Thyroid gland (tissue), 4 donors: ENCODE measurements at regions of chr9 and their contacts with region 1.

Region 1: GRCh38 chr9:116149844-116150243 is 3.7 kb upstream of the PAPPA start:
- DNase-seq: peak in 1 of 2 donors; percentile 15
- H3K4me3 ChIP-seq: no peak overlapping the region
- H3K27ac ChIP-seq: no peak overlapping the region
- H3K4me1 ChIP-seq: peaks cover 5 to 7% of the 10 kb centered on the region in 2 donors
- H3K27me3 ChIP-seq: no peaks in the 10 kb centered on the region
- CTCF ChIP-seq: peak; percentile 21 to 72 (median 48)
- POLR2A ChIP-seq: no peak

Region 2: GRCh38 chr9:115604831-115605483 is 544.9 kb before region 1 on chr9:
- intact Hi-C with region 1: no loop called
- DNase-seq: no peak
- H3K4me3 ChIP-seq: no peak overlapping the region
- H3K27ac ChIP-seq: no peak overlapping the region
- H3K4me1 ChIP-seq: no peaks in the 10 kb centered on the region
- H3K27me3 ChIP-seq: no peaks in the 10 kb centered on the region
- CTCF ChIP-seq: no peak
- POLR2A ChIP-seq: no peak

Region 3: GRCh38 chr9:116450378-116451139 is 300.7 kb after region 1 on chr9:
- intact Hi-C with region 1: no loop called
- DNase-seq: peak; percentile 32 to 58
- H3K4me3 ChIP-seq: no peak overlapping the region
- H3K27ac ChIP-seq: peak overlapping the region in 1 of 3 donors; percentile 27
- H3K4me1 ChIP-seq: peaks cover 0 to 9% of the 10 kb centered on the region in 2 donors
- H3K27me3 ChIP-seq: no peaks in the 10 kb centered on the region
- CTCF ChIP-seq: no peak
- POLR2A ChIP-seq: no peak

Region 4: DNA sequence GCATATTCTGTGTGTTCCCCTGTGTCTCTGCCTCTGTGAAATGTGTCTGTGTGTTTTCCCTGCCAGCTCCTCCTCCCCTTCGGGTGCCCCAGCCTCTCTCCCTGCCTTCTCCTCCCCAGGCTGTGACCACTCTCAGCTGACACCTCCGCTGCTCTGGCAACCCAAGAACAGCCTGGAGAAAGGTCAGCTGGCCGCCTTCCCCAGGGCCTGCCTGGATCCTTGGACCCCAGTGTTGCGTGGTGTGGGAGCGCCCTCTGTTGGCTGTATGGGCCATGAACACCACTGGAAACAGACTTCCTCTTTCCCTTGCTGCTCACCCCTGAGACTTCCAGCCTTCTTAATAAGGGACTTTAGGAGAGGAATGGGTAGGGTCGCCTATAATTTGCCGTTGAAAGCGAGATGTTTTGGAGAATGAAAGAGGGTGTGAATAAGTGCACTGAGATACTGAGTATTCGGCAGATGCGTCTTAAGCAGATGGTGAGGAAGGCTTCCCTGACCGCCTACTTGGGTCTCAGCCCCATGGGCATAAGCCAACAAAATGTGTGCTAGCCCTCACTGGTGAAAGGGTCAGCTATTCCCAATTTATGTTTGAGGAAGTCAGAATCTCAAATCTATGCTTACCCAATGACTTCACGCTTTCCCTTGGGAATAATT is 422.4 kb after region 1 on chr9:
- intact Hi-C with region 1: loop called (anchors 5 kb)
- DNase-seq: peak; percentile 82 to 85
- H3K4me3 ChIP-seq: no peak overlapping the region
- H3K27ac ChIP-seq: no peak overlapping the region
- H3K4me1 ChIP-seq: peaks cover 3 to 6% of the 10 kb centered on the region in 2 donors
- H3K27me3 ChIP-seq: no peaks in the 10 kb centered on the region
- CTCF ChIP-seq: peak; percentile 53 to 89 (median 85)
- POLR2A ChIP-seq: no peak

Region 5: GRCh38 chr9:116646661-116647512 is 497.0 kb after region 1 on chr9:
- intact Hi-C with region 1: loop called (anchors 10 kb)
- DNase-seq: no peak
- H3K4me3 ChIP-seq: no peak overlapping the region
- H3K27ac ChIP-seq: no peak overlapping the region
- H3K4me1 ChIP-seq: no peaks in the 10 kb centered on the region
- H3K27me3 ChIP-seq: no peaks in the 10 kb centered on the region
- CTCF ChIP-seq: peak in 4 of 6 experiments; percentile 8 to 52 (median 39)
- POLR2A ChIP-seq: no peak